ENCODE measurements at regions of chr6 and their contacts with region 1.

Region 1: GRCh38 chr6:41683510-41684310 is 45.4 kb downstream of the MDFI start:
- DNase-seq: no peak
- H3K4me3 ChIP-seq: peak overlapping the region; percentile 43
- H3K27ac ChIP-seq: no peak overlapping the region
- H3K27me3 ChIP-seq: no peaks in the 10 kb centered on the region
- CTCF ChIP-seq: peak; percentile 86

Region 2: GRCh38 chr6:41306187-41306854 is 377.4 kb before region 1 on chr6:
- CTCF ChIA-PET with region 1: interaction called, 12 read pairs
- POLR2A ChIA-PET with region 1: no interaction called
- DNase-seq: no peak
- H3K4me3 ChIP-seq: no peak overlapping the region
- H3K27ac ChIP-seq: no peak overlapping the region
- H3K27me3 ChIP-seq: peaks cover 15% of the 10 kb centered on the region
- CTCF ChIP-seq: peak; percentile 64

Region 3: DNA sequence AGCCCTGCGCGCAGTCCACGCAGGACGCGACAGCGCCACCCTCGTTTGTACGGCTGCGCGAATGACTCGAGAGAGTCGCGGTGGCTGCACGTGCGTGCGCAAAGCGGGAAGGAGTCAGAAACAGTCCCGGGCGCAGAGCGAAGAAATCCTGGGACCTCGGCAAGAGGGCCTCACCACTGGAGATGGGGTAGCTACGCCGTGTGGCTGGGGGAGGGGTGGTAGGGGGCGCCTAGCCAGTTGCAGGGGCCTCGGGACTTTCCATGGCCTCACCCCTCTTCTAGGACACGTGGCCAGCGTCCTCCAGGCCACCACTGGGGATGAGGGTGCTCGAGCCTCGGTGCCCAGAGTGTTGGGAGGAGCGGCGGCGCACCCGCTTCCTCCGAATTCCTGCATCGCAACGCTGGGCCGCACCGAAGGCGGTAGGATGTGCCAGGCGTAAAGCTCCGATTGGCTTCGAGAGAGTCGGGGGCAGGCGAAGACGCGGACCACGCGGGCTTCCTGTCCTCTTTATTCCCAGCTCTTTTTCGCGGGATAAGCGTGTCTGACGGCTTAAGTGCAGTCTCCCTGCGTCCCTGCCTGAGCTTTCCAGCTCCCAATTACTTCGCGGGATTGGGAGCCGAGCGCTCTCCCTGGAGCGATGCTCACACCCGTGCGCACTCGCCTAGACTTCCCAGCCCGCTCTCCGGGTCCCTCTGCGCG is 309.6 kb before region 1 on chr6:
- CTCF ChIA-PET with region 1: interaction called, 122 read pairs
- POLR2A ChIA-PET with region 1: no interaction called
- DNase-seq: no peak
- H3K4me3 ChIP-seq: no peak overlapping the region
- H3K27ac ChIP-seq: no peak overlapping the region
- H3K27me3 ChIP-seq: peaks cover 86% of the 10 kb centered on the region
- CTCF ChIP-seq: no peak

Region 4: GRCh38 chr6:41424370-41425058 is 259.2 kb before region 1 on chr6:
- CTCF ChIA-PET with region 1: interaction called, 28 read pairs
- POLR2A ChIA-PET with region 1: no interaction called
- DNase-seq: peak; percentile 55
- H3K4me3 ChIP-seq: no peak overlapping the region
- H3K27ac ChIP-seq: no peak overlapping the region
- H3K27me3 ChIP-seq: peaks cover 48% of the 10 kb centered on the region
- CTCF ChIP-seq: peak; percentile 92

Region 5: DNA sequence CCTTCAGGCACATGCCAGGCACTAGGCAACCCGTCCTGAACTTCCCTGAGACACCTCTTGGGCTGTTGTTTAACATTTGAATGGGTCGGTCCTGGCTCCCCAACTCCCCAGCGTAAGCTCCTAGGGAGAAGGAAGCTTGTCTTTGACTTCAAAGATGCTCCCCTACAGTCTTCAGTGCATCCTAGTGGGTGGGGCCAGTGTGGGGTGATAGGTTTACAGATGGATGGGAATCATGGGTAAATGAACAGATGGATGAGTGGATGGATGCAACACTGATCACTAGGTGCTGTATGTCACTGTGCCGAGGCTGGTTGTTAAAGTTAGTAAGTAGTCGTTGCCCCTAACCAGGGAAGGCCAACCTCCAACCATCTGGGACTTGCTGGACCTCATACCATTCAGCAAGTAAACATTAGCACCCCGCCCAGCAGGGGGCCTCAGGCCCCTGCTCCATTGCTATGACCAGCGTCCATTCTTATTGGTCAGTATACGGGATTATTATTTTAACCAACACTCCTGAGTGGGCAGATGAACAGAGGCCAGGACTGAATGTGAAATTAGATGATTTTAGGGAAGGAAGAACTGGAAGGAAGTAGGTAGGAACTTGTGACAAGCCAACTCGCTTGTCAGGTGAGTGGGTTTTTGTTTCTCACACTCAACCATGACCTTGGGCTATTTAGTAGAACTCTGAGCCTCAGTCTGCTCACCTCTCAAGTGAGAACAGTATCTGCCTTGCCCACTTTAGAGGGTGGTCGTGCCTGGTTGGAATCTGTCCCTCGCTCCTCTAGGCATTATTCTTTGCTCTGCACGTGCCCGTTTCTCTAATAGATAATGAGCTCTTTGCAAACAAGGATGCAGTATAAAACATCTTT is 220.4 kb before region 1 on chr6:
- CTCF ChIA-PET with region 1: interaction called, 11 read pairs
- POLR2A ChIA-PET with region 1: no interaction called
- DNase-seq: peak; percentile 30
- H3K4me3 ChIP-seq: no peak overlapping the region
- H3K27ac ChIP-seq: no peak overlapping the region
- H3K27me3 ChIP-seq: peaks cover 1% of the 10 kb centered on the region
- CTCF ChIP-seq: peak; percentile 85

Region 6: GRCh38 chr6:41519745-41520699 is 163.7 kb before region 1 on chr6:
- CTCF ChIA-PET with region 1: no interaction called
- POLR2A ChIA-PET with region 1: no interaction called
- DNase-seq: no peak
- H3K4me3 ChIP-seq: no peak overlapping the region
- H3K27ac ChIP-seq: no peak overlapping the region
- H3K27me3 ChIP-seq: peaks cover 23% of the 10 kb centered on the region
- CTCF ChIP-seq: no peak

Region 7: DNA sequence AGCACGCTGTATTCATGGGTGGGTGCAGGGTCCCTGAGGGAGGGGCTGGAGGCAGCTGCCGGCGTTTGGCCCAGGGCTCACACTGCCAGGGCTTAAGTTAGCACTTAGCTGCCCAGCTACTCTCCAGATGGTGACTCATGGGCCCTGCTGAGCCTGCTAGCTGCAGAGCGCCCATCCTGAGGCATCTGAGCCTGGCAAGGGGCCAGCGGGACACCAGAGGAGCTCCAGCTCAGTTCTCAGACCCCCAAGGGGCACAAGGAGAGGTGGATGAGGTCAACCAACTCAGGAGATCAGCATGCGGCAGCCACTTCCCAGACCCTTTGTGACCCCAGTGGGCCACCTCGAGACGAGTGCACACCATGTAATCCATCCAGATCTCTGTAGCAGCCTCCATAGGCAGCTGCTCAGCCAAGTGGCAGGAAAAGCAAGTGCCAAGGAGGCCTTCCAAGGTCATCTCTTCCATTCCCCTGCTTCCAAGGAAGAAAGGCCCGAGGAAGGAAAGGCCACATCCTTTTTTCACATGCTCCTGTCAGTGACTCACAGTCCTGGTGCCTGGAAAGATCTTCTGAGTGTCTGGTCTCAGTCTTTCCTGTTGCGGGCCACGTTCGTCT is 102.2 kb before region 1 on chr6:
- CTCF ChIA-PET with region 1: interaction called, 17 read pairs
- POLR2A ChIA-PET with region 1: no interaction called
- DNase-seq: peak; percentile 59
- H3K4me3 ChIP-seq: no peak overlapping the region
- H3K27ac ChIP-seq: peak overlapping the region; percentile 55
- H3K27me3 ChIP-seq: no peaks in the 10 kb centered on the region
- CTCF ChIP-seq: no peak

Region 8: GRCh38 chr6:41630946-41631345 is 52.8 kb before region 1 on chr6:
- CTCF ChIA-PET with region 1: no interaction called
- POLR2A ChIA-PET with region 1: no interaction called
- DNase-seq: no peak
- H3K4me3 ChIP-seq: no peak overlapping the region
- H3K27ac ChIP-seq: no peak overlapping the region
- H3K27me3 ChIP-seq: peaks cover 52% of the 10 kb centered on the region
- CTCF ChIP-seq: no peak

Region 9: GRCh38 chr6:41697861-41698781 is 14.4 kb after region 1 on chr6:
- CTCF ChIA-PET with region 1: interaction called, 50 read pairs
- POLR2A ChIA-PET with region 1: no interaction called
- DNase-seq: peak; percentile 89
- H3K4me3 ChIP-seq: peak overlapping the region; percentile 18
- H3K27ac ChIP-seq: peak overlapping the region; percentile 99
- H3K27me3 ChIP-seq: no peaks in the 10 kb centered on the region
- CTCF ChIP-seq: no peak

Region 10: GRCh38 chr6:41741625-41742489 is 58.1 kb after region 1 on chr6:
- CTCF ChIA-PET with region 1: no interaction called
- POLR2A ChIA-PET with region 1: no interaction called
- DNase-seq: no peak
- H3K4me3 ChIP-seq: no peak overlapping the region
- H3K27ac ChIP-seq: no peak overlapping the region
- H3K27me3 ChIP-seq: peaks cover 4% of the 10 kb centered on the region
- CTCF ChIP-seq: no peak

Region 11: DNA sequence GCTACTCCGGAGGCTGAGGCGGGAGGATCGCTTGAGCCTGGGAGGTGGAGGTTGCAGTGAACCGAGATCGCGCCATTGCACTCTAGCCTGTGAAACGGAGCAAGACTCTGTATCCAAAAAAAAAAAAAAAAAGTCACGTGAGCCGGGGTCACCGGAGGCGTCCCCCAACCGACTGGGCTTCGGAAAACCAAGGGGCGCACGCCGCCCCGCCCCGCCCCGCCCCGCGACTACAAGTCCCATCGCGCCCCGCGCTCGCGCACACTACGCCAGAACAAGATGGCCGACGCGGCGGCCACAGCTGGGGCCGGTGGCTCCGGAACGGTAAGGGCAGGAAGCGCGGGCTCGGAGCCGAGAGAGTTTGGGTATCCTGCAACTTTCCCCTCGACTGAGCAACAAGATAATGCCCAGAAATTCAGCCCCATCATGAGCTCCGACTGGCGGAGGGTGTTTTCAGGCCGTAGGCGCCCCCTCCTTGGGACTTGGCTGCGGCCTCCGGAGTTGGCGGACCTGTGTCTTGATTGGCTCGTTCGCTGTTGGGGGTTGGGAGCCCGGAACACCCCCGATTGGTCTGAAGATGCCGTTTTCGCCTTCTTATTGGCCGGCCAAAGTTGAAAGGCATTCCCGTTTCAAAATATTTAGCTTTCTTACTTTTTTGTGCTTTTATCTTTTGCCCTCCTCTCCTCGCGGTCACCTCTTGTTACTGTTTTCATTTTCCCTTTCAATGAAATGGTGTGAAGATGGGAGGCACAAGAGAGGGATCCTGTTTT is 366.7 kb after region 1 on chr6 and contains the start of gene TAF8:
- CTCF ChIA-PET with region 1: no interaction called
- POLR2A ChIA-PET with region 1: no interaction called
- DNase-seq: peak; percentile 82
- H3K4me3 ChIP-seq: peak within 1 kb of the TSS; percentile 90
- H3K27ac ChIP-seq: peak within 1 kb of the TSS; percentile 93
- H3K27me3 ChIP-seq: no peaks in the 10 kb centered on the region
- CTCF ChIP-seq: no peak
- polyA plus RNA-seq, gene TAF8: 14.6 and 15.0 TPM in 2 replicates

Measured in AG04450 (cell line).